ENCODE measurements at regions of chr9 and their contacts with region 1.

Region 1: GRCh38 chr9:19440823-19441580 is 32.2 kb downstream of the ACER2 start:
- H3K4me3 ChIP-seq: no peak overlapping the region
- H3K27ac ChIP-seq: no peak overlapping the region
- H3K4me1 ChIP-seq: no peaks in the 10 kb centered on the region
- CTCF ChIP-seq: no peak

Region 2: DNA sequence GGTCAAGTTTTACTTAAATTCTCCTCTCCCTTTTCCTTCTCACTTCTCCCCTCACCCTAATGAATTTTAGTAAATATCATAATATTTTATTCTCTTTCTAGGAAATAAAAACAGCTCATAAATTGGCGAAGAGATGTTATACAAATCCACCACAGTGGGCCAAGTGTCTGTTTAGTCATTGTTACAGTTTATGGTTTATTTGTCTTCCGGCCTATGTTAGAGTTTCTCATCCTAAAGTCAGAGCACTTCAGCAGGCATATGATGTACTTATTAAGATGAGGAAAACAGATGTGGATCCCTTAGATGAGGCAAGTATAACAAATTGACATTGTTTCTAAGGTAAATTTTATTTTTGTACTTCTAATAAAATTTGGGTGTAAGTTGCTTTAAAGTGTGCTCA is 109.1 kb before region 1 on chr9:
- CTCF ChIA-PET with region 1: no interaction called
- POLR2A ChIA-PET with region 1: no interaction called
- H3K4me3 ChIP-seq: no peak overlapping the region
- H3K27ac ChIP-seq: no peak overlapping the region
- H3K4me1 ChIP-seq: no peaks in the 10 kb centered on the region
- CTCF ChIP-seq: no peak

Region 3: DNA sequence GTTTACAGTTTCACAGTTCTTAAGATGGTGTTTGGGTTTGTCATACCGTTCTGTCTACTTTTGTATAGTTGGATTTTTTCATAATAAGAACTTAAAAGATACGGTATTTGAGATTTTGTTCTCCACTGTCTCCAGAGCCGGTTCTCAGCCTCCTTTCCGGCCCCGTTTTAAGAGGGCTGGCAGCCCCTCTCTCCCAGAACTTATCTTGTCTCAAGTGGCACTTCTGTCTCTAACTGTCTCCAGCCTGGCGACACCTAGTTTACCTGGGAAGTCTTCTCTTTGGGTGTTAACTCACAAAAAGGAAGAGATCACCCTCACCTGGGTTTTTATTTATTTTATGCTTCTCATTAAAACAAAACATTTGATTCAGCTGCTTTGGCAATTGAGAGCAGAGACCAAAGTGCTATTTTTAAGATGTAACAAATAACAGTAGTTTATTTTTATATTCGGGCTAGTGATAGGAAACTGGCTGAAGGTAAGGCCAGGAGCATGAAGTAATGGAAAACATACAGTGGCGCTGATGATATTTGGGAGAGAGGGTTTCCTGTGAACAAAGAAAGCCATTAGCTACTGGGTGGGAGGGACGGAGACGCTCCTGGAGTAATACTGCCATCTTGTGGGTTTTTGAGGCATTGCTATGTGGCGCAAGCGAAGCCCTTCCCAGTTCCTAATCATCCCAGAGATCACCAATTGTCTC is 16.1 kb after region 1 on chr9:
- CTCF ChIA-PET with region 1: interaction called, 10 read pairs
- POLR2A ChIA-PET with region 1: no interaction called
- H3K4me3 ChIP-seq: no peak overlapping the region
- H3K27ac ChIP-seq: no peak overlapping the region
- H3K4me1 ChIP-seq: no peaks in the 10 kb centered on the region; the same call in 1 of the 2 replicates
- CTCF ChIP-seq: peak; percentile 77

Region 4: GRCh38 chr9:19554529-19554928 is 113.5 kb after region 1 on chr9:
- CTCF ChIA-PET with region 1: no interaction called
- POLR2A ChIA-PET with region 1: no interaction called
- H3K4me3 ChIP-seq: no peak overlapping the region
- H3K27ac ChIP-seq: no peak overlapping the region
- H3K4me1 ChIP-seq: no peaks in the 10 kb centered on the region; the same call in 1 of the 2 replicates
- CTCF ChIP-seq: no peak

Region 5: GRCh38 chr9:19587678-19588077 is 146.7 kb after region 1 on chr9:
- CTCF ChIA-PET with region 1: no interaction called
- POLR2A ChIA-PET with region 1: no interaction called
- H3K4me3 ChIP-seq: no peak overlapping the region
- H3K27ac ChIP-seq: no peak overlapping the region
- H3K4me1 ChIP-seq: no peaks in the 10 kb centered on the region
- CTCF ChIP-seq: no peak

Measured in HEK293 (cell line).